ENCODE measurements at regions of chr6 and their contacts with region 1.

Region 1: GRCh38 chr6:155174576-155175211 is 89.1 kb upstream of the CLDN20 start:
- DNase-seq: peak; percentile 82
- ATAC-seq: peak; percentile 96
- H3K4me3 ChIP-seq: no peak overlapping the region
- H3K27ac ChIP-seq: no peak overlapping the region
- H3K4me1 ChIP-seq: peaks cover 7% of the 10 kb centered on the region; the same call in 1 of the 2 replicates
- H3K27me3 ChIP-seq: no peaks in the 10 kb centered on the region
- CTCF ChIP-seq: peak; percentile 90
- EP300 ChIP-seq: no peak
- POLR2A ChIP-seq: no peak
- RAD21 ChIP-seq: peak; percentile 72

Region 2: GRCh38 chr6:154868143-154868594 is 306.5 kb before region 1 on chr6:
- CTCF ChIA-PET with region 1: interaction called, 14 read pairs
- POLR2A ChIA-PET with region 1: no interaction called
- in situ Hi-C with region 1: loop called (anchors 5 kb)
- intact Hi-C with region 1: loop called (anchors 1 kb)
- DNase-seq: peak; percentile 79
- ATAC-seq: peak; percentile 41
- H3K4me3 ChIP-seq: no peak overlapping the region
- H3K27ac ChIP-seq: no peak overlapping the region
- H3K4me1 ChIP-seq: peaks cover 15% of the 10 kb centered on the region
- H3K27me3 ChIP-seq: no peaks in the 10 kb centered on the region
- CTCF ChIP-seq: peak; percentile 79
- EP300 ChIP-seq: no peak
- POLR2A ChIP-seq: no peak
- RAD21 ChIP-seq: peak; percentile 80

Region 3: DNA sequence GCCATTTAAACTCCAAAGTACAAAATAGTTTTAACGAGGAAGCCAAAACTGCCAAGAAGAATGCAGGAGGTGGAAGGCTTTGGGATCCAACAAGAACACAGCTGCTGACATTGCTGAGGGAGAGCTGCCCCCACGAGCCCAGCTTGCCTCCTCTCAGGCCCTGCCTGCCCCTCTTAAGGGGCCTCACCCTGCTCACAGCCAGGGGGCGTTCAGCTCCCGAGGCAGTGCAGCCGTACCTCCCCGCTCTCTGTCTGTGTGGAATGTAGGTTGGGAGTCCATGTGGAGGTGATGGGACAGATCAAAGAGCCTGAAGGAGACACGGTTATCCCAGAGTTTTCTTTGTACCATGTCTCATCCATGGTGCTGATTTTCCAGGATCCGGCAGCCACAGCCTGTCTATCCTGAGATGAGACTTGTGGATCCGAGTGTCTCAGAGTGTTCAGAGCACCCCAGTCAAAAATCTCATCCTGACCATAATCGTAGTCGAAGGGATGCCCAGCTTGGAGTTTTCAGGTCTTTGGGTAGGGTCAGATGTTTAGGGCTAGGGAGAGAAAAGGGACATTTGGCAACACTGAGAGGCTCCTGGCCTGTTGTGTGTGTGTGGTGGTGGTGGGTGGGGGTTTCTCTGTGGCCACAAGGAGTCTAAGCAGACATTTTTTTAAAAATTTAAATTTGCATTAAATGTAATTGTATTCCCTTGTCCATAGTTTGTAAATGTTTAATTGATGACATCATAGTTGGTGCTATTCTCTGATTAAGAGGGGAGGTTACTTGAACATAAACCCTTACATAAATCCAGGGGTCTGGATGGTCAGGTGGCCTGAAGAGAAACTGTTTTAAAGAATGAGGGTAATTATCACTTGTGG is 22.2 kb before region 1 on chr6:
- CTCF ChIA-PET with region 1: interaction called, 4 read pairs
- POLR2A ChIA-PET with region 1: no interaction called
- in situ Hi-C with region 1: no loop called
- intact Hi-C with region 1: loop called (anchors 2 kb)
- DNase-seq: peak; percentile 75
- ATAC-seq: peak; percentile 99
- H3K4me3 ChIP-seq: no peak overlapping the region
- H3K27ac ChIP-seq: no peak overlapping the region
- H3K4me1 ChIP-seq: peaks cover 31% of the 10 kb centered on the region
- H3K27me3 ChIP-seq: no peaks in the 10 kb centered on the region
- CTCF ChIP-seq: peak; percentile 90
- EP300 ChIP-seq: no peak
- POLR2A ChIP-seq: no peak
- RAD21 ChIP-seq: peak; percentile 71

Region 4: GRCh38 chr6:155248008-155249001 is 73.6 kb after region 1 on chr6:
- CTCF ChIA-PET with region 1: interaction called, 8 read pairs
- POLR2A ChIA-PET with region 1: no interaction called
- in situ Hi-C with region 1: loop called (anchors 5 kb)
- intact Hi-C with region 1: loop called (anchors 1 kb)
- DNase-seq: peak; percentile 43
- ATAC-seq: peak; percentile 51
- H3K4me3 ChIP-seq: no peak overlapping the region
- H3K27ac ChIP-seq: no peak overlapping the region
- H3K4me1 ChIP-seq: peaks cover 8% of the 10 kb centered on the region; the same call in 1 of the 2 replicates
- H3K27me3 ChIP-seq: no peaks in the 10 kb centered on the region
- CTCF ChIP-seq: peak; percentile 61
- EP300 ChIP-seq: no peak
- POLR2A ChIP-seq: peak in 1 of 2 experiments; percentile 57; a peak in 2 of 4 replicates
- RAD21 ChIP-seq: no peak

Region 5: DNA sequence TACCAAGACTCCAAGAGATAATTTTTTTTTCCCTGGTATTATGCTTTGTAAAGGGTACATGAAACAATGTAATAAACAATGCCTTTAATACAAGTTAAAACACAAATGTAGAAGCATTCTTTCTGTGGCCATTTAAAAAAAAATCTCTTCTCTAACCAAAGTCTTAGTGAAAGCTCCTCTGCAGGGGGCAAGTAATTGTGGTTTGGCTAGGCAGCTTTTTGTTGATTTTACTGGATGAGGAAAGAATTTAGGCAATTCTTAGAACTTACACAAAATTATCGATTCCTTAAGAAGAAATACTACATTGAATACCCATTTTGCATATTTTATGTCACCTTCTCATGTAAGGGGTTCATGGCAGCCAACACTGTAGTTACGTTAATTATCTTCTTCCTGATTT is 127.2 kb after region 1 on chr6:
- CTCF ChIA-PET with region 1: no interaction called
- POLR2A ChIA-PET with region 1: no interaction called
- in situ Hi-C with region 1: no loop called
- intact Hi-C with region 1: no loop called
- DNase-seq: no peak
- ATAC-seq: no peak
- H3K4me3 ChIP-seq: no peak overlapping the region
- H3K27ac ChIP-seq: no peak overlapping the region
- H3K4me1 ChIP-seq: peaks cover 21% of the 10 kb centered on the region
- H3K27me3 ChIP-seq: no peaks in the 10 kb centered on the region
- CTCF ChIP-seq: no peak
- EP300 ChIP-seq: no peak
- POLR2A ChIP-seq: no peak
- RAD21 ChIP-seq: no peak

Region 6: GRCh38 chr6:155444120-155444917 is 269.6 kb after region 1 on chr6:
- CTCF ChIA-PET with region 1: no interaction called
- POLR2A ChIA-PET with region 1: no interaction called
- in situ Hi-C with region 1: no loop called
- intact Hi-C with region 1: no loop called
- DNase-seq: peak; percentile 100
- ATAC-seq: peak; percentile 100
- H3K4me3 ChIP-seq: peak overlapping the region in 1 of 3 experiments; percentile 28; a peak in 1 of 6 replicates
- H3K27ac ChIP-seq: peak overlapping the region; percentile 96
- H3K4me1 ChIP-seq: peaks cover 78% of the 10 kb centered on the region
- H3K27me3 ChIP-seq: no peaks in the 10 kb centered on the region
- CTCF ChIP-seq: no peak
- EP300 ChIP-seq: peak; percentile 99
- POLR2A ChIP-seq: peak in 1 of 2 experiments; percentile 59; a peak in 2 of 4 replicates
- RAD21 ChIP-seq: peak; percentile 37

Region 7: DNA sequence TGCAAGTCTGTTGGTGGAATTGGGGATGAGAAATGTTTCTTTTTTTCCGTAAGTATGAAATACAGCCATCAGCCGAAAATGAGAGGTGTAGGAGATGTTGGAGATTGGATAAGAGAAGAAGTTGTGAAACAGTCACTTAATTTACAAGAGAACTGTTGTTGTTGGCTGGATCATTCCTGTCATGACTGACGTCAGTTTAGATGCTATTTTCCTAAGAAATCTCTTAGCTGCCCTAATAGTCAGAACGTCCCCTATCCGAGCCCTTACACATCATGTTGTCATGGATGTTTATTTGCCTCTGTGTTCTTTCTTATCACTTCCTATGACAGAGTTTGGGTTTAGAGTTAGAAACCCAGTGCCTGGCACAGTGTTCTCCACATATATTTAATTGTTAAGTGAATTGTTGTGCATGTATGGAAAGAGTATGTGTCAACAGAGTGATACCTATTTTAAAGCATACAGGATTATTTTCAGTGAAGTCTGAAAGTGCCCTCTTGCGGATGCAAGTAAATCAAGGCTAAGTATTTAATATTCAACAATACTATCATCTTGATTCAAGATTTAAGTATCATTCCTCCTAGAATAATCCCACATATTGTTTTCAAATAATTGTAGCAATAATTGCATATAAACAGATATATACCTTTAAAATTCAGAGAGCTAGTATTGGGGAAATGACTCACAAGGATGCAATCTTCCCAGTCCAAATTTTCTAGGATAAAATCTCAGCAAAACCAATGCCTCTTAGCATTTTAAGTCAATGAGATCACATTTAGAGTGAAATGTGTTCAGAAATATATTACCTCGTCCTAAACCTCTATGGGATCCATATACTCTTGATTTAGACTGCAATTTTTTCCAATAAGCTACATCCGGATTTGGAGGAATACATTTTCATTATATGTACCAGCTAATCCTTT is 590.8 kb after region 1 on chr6:
- CTCF ChIA-PET with region 1: interaction called, 6 read pairs
- POLR2A ChIA-PET with region 1: no interaction called
- in situ Hi-C with region 1: loop called (anchors 10 kb)
- intact Hi-C with region 1: loop called (anchors 1 kb)
- DNase-seq: peak; percentile 12
- ATAC-seq: no peak
- H3K4me3 ChIP-seq: no peak overlapping the region
- H3K27ac ChIP-seq: no peak overlapping the region
- H3K4me1 ChIP-seq: no peaks in the 10 kb centered on the region
- H3K27me3 ChIP-seq: peaks cover 0 to 3% of the 10 kb centered on the region in 2 experiments; a peak in 1 of 5 replicates
- CTCF ChIP-seq: peak; percentile 44
- EP300 ChIP-seq: no peak
- POLR2A ChIP-seq: no peak
- RAD21 ChIP-seq: no peak

Measured in HepG2 (cell line).